ENCODE measurements at regions of chr4 and their contacts with region 1.

Region 1: DNA sequence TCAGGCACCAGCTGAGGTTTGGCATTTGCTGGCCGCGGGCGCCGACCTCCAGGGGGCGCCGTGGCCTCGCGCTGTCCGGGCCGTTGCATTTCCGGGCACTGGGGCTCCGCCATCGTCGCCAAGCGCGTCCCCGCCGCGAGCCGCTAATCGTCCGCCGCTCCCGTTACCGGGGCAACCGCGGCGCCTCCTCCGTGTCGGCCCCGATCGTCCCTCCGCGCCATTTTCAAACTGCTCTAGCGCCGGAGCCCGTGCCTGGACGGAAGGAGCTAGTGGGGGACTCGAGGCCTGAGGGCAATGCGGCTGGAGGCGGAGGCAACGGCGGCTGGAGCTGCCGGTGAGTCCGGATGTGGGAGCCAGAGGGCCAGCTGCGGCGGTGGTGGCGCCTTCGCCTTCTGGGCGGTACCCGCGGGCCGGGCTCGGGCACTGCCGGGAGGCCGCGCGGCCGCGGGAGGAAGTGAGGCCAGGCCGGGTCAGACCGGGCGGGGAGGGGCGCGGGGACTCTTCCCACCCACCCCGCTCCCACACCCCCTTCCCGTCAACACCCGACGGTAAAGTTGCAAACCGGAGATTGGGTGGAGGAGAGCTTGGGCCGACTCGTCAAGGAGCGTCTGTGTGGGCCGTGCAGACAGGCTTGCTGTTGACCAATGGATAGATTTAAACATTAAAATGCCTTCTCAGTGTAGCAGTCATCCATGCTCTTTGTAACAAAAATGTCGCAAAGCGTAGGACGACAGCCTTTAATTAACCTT is at the start of gene CEP135:
- DNase-seq: peak; percentile 96
- ATAC-seq: peak; percentile 78
- H3K4me3 ChIP-seq: peak within 1 kb of the TSS; percentile 73 to 91 (median 87)
- H3K4me3 Mint-ChIP-seq: peak within 1 kb of the TSS; percentile 89
- H3K27ac ChIP-seq: peak within 1 kb of the TSS; percentile 100
- H3K27ac Mint-ChIP-seq: peak within 1 kb of the TSS; percentile 98
- H3K4me1 ChIP-seq: peaks cover 30 to 37% of the 10 kb centered on the region in 2 donors
- H3K4me1 Mint-ChIP-seq: peaks cover 53% of the 10 kb centered on the region
- H3K27me3 ChIP-seq: no peaks in the 10 kb centered on the region
- H3K27me3 Mint-ChIP-seq: no peaks in the 10 kb centered on the region
- CTCF ChIP-seq: peak; percentile 99
- total RNA-seq, gene CEP135: 39.4 and 41.0 TPM in 2 replicates

Region 2: GRCh38 chr4:54930226-54930625 is 1018.7 kb before region 1 on chr4:
- CTCF ChIA-PET with region 1: no interaction called
- POLR2A ChIA-PET with region 1: no interaction called
- intact Hi-C with region 1: no loop called
- DNase-seq: no peak
- ATAC-seq: no peak
- H3K4me3 ChIP-seq: no peak overlapping the region
- H3K4me3 Mint-ChIP-seq: no peak overlapping the region
- H3K27ac ChIP-seq: no peak overlapping the region
- H3K27ac Mint-ChIP-seq: no peak overlapping the region
- H3K4me1 ChIP-seq: no peaks in the 10 kb centered on the region
- H3K4me1 Mint-ChIP-seq: no peaks in the 10 kb centered on the region
- H3K27me3 ChIP-seq: peaks cover 0 to 6% (median 1%) of the 10 kb centered on the region in 4 experiments
- H3K27me3 Mint-ChIP-seq: peaks cover 9% of the 10 kb centered on the region
- CTCF ChIP-seq: no peak

Region 3: GRCh38 chr4:55345980-55346850 is 602.7 kb before region 1 on chr4 and contains the start of gene SRD5A3:
- CTCF ChIA-PET with region 1: no interaction called
- POLR2A ChIA-PET with region 1: no interaction called
- intact Hi-C with region 1: loop called (anchors 5 kb)
- DNase-seq: peak; percentile 85
- ATAC-seq: peak; percentile 89
- H3K4me3 ChIP-seq: peak within 1 kb of the TSS; percentile 56 to 84 (median 73)
- H3K4me3 Mint-ChIP-seq: peak within 1 kb of the TSS; percentile 85
- H3K27ac ChIP-seq: peak within 1 kb of the TSS; percentile 69 to 85
- H3K27ac Mint-ChIP-seq: peak within 1 kb of the TSS; percentile 94
- H3K4me1 ChIP-seq: peaks cover 4 to 9% of the 10 kb centered on the region in 2 donors
- H3K4me1 Mint-ChIP-seq: peaks cover 10% of the 10 kb centered on the region
- H3K27me3 ChIP-seq: no peaks in the 10 kb centered on the region
- H3K27me3 Mint-ChIP-seq: no peaks in the 10 kb centered on the region
- CTCF ChIP-seq: peak; percentile 99
- total RNA-seq, gene SRD5A3: 3.6 and 4.0 TPM in 2 replicates

Region 4: DNA sequence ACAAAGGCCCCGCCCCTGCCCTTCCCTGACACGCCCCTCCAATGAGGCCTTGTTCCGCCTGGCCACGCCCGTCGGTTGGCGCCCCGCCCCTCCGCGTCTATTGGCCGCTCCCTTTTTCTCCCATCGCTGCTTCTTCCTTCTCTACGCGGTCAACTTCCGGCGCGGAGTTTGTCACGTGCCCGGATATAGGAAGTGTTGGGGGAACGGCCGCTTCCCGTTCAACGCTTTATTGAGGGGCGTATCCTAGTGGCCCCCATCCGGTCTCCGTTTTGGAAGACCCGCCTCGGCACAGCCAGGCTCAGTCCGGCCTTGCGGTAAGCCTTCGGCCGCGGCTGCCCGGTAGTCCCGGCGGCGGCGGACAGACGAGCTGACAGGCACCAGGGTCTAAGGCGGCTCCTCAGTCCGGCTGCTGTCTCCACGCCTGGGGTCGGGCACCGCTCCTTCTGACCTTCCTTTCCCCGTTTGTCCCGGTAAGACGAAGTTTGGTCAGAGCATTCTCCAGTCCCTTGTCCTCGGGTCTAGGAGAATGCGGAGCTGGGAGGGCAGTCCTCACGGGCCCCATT is 95.3 kb before region 1 on chr4 and contains the start of gene EXOC1:
- CTCF ChIA-PET with region 1: interaction called, 15 read pairs
- POLR2A ChIA-PET with region 1: interaction called, 6 read pairs
- intact Hi-C with region 1: loop called (anchors 1 kb)
- DNase-seq: peak; percentile 97
- ATAC-seq: peak; percentile 100
- H3K4me3 ChIP-seq: peak within 1 kb of the TSS; percentile 85 to 98 (median 97)
- H3K4me3 Mint-ChIP-seq: no peak within 1 kb of the TSS
- H3K27ac ChIP-seq: peak within 1 kb of the TSS; percentile 71 to 86
- H3K27ac Mint-ChIP-seq: peak within 1 kb of the TSS; percentile 94
- H3K4me1 ChIP-seq: peaks cover 11 to 12% of the 10 kb centered on the region in 2 donors
- H3K4me1 Mint-ChIP-seq: peaks cover 13% of the 10 kb centered on the region
- H3K27me3 ChIP-seq: peaks cover 0 to 14% (median 2%) of the 10 kb centered on the region in 4 experiments
- H3K27me3 Mint-ChIP-seq: peaks cover 12% of the 10 kb centered on the region
- CTCF ChIP-seq: no peak
- total RNA-seq, gene EXOC1: 42.5 and 46.7 TPM in 2 replicates

Region 5: DNA sequence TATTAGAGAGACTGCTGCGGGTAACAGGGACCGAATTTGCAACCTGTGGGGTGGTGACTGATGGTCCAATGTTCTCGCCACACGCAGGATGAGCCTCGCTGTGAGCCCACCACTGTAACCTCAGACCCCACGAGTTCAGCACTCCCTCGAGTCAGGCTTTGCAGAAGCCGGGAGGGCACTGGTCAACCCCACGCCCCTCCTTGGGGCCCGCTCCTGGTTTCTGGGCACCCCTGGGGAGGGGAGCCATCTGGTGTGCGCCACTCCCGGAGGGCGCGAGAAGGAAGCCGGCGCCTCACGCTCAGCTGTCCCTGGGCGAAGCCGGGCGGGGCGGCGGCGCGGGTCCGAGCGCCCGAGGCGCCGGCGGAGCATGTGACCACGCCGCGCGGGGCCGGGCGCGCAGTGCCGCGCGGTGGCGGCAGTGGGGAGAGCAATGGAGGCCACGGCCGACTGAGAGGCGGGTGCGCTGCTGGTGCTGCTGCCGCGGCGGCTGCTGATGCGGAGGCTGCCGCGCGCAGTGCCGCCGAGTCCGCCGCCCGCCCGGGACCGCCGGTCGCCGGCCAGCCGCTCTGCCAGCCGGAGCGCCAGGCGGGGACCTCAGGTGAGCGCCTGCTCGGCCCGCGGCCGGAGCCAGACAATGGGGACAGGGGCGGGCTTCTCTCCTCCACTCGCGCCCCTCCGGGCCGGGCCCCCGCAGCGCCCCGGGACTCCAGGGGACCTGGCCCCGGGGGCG is 100.0 kb after region 1 on chr4:
- CTCF ChIA-PET with region 1: interaction called, 3 read pairs
- POLR2A ChIA-PET with region 1: no interaction called
- intact Hi-C with region 1: loop called (anchors 1 kb)
- DNase-seq: peak; percentile 68
- ATAC-seq: peak; percentile 91
- H3K4me3 ChIP-seq: peak overlapping the region in 4 of 5 experiments; percentile 41 to 63 (median 56)
- H3K4me3 Mint-ChIP-seq: peak overlapping the region; percentile 88
- H3K27ac ChIP-seq: no peak overlapping the region
- H3K27ac Mint-ChIP-seq: no peak overlapping the region
- H3K4me1 ChIP-seq: peaks cover 15 to 17% of the 10 kb centered on the region in 2 donors
- H3K4me1 Mint-ChIP-seq: peaks cover 16% of the 10 kb centered on the region
- H3K27me3 ChIP-seq: peaks cover 0 to 20% (median 11%) of the 10 kb centered on the region in 4 experiments
- H3K27me3 Mint-ChIP-seq: peaks cover 27% of the 10 kb centered on the region
- CTCF ChIP-seq: no peak

Region 6: DNA sequence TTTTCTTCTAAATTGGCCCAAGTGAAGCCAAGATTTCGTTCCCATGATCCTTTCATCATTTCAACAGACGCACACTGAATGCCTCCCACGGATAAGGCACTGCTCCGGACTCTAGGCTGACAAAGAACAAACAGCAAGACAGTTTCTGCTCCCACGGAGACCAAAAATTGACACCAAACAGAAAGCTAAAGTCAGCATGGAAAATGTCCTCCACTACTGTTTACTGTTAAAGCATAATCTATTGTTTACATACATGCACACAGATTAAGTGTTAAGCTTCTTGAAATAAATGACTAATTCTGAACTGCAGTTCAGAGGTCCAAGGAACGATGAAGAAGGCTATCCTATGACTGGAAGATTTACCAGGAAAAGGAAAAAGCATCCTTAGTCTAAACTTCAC is 238.8 kb after region 1 on chr4:
- CTCF ChIA-PET with region 1: no interaction called
- POLR2A ChIA-PET with region 1: no interaction called
- intact Hi-C with region 1: no loop called
- DNase-seq: no peak
- ATAC-seq: no peak
- H3K4me3 ChIP-seq: no peak overlapping the region
- H3K4me3 Mint-ChIP-seq: no peak overlapping the region
- H3K27ac ChIP-seq: no peak overlapping the region
- H3K27ac Mint-ChIP-seq: no peak overlapping the region
- H3K4me1 ChIP-seq: peaks cover 14 to 15% of the 10 kb centered on the region in 2 donors
- H3K4me1 Mint-ChIP-seq: peaks cover 21% of the 10 kb centered on the region
- H3K27me3 ChIP-seq: no peaks in the 10 kb centered on the region
- H3K27me3 Mint-ChIP-seq: no peaks in the 10 kb centered on the region
- CTCF ChIP-seq: no peak

Region 7: GRCh38 chr4:56424697-56425514 is 476.0 kb after region 1 on chr4:
- CTCF ChIA-PET with region 1: interaction called, 10 read pairs
- POLR2A ChIA-PET with region 1: no interaction called
- intact Hi-C with region 1: no loop called
- DNase-seq: peak; percentile 67
- ATAC-seq: no peak
- H3K4me3 ChIP-seq: no peak overlapping the region
- H3K4me3 Mint-ChIP-seq: no peak overlapping the region
- H3K27ac ChIP-seq: no peak overlapping the region
- H3K27ac Mint-ChIP-seq: no peak overlapping the region
- H3K4me1 ChIP-seq: no peaks in the 10 kb centered on the region
- H3K4me1 Mint-ChIP-seq: peaks cover 9% of the 10 kb centered on the region
- H3K27me3 ChIP-seq: no peaks in the 10 kb centered on the region
- H3K27me3 Mint-ChIP-seq: no peaks in the 10 kb centered on the region
- CTCF ChIP-seq: peak; percentile 85

Region 8: DNA sequence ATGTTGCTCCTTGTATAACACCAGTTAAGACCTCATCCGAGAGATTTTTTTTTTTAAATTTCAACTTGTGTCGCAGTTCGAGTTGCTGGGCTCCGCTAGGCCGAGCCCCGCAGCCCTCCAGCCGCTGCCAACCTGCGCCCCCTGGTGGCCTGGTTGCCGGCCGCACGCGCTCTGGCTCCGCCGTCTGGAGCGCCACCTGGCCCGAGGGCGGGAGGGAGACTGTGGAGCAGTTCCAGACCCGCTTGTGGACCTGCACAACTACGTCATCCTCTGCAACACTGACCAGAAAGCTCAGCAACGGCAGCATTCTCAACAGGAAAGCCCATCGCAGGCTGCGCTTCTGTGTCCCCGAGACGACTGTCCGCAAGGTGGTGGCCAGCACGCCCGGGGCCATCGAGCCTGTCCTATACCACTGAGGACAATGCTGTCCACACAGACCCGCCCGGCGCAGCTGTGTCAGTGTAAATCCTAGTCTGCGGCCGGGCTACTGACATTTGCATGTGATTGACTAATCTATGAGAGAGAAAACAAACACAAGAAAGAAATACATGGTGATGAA is 595.8 kb after region 1 on chr4:
- CTCF ChIA-PET with region 1: no interaction called
- POLR2A ChIA-PET with region 1: no interaction called
- intact Hi-C with region 1: loop called (anchors 5 kb)
- DNase-seq: peak; percentile 88
- ATAC-seq: peak; percentile 100
- H3K4me3 ChIP-seq: peak overlapping the region in 4 of 5 experiments; percentile 17 to 45 (median 38)
- H3K4me3 Mint-ChIP-seq: peak overlapping the region; percentile 77
- H3K27ac ChIP-seq: no peak overlapping the region
- H3K27ac Mint-ChIP-seq: peak overlapping the region; percentile 53
- H3K4me1 ChIP-seq: peaks cover 7% of the 10 kb centered on the region in 2 donors
- H3K4me1 Mint-ChIP-seq: peaks cover 12% of the 10 kb centered on the region
- H3K27me3 ChIP-seq: peaks cover 0 to 5% (median 3%) of the 10 kb centered on the region in 4 experiments
- H3K27me3 Mint-ChIP-seq: peaks cover 13% of the 10 kb centered on the region
- CTCF ChIP-seq: peak; percentile 99

Measured in B cell (primary cell).